Dorsolateral prefrontal cortex (tissue), 120 donors: ENCODE measurements at regions of chr4 and their contacts with region 1.

Region 1: GRCh38 chr4:87916626-87917025 is 58.9 kb upstream of the SPP1 start:
- DNase-seq: no peak
- H3K4me3 ChIP-seq: no peak overlapping the region
- H3K27ac ChIP-seq: no peak overlapping the region
- H3K27me3 ChIP-seq: no peaks in the 10 kb centered on the region
- CTCF ChIP-seq: no peak

Region 2: GRCh38 chr4:87965501-87965975 is 48.9 kb after region 1 on chr4:
- intact Hi-C with region 1: loop called in 1 of 2 experiments (anchors 5 kb)
- DNase-seq: no peak
- H3K4me3 ChIP-seq: no peak overlapping the region
- H3K27ac ChIP-seq: no peak overlapping the region
- H3K27me3 ChIP-seq: no peaks in the 10 kb centered on the region
- CTCF ChIP-seq: no peak